IMR-90 (cell line): ENCODE measurements at regions of chr20 and their contacts with region 1.

Region 1: DNA sequence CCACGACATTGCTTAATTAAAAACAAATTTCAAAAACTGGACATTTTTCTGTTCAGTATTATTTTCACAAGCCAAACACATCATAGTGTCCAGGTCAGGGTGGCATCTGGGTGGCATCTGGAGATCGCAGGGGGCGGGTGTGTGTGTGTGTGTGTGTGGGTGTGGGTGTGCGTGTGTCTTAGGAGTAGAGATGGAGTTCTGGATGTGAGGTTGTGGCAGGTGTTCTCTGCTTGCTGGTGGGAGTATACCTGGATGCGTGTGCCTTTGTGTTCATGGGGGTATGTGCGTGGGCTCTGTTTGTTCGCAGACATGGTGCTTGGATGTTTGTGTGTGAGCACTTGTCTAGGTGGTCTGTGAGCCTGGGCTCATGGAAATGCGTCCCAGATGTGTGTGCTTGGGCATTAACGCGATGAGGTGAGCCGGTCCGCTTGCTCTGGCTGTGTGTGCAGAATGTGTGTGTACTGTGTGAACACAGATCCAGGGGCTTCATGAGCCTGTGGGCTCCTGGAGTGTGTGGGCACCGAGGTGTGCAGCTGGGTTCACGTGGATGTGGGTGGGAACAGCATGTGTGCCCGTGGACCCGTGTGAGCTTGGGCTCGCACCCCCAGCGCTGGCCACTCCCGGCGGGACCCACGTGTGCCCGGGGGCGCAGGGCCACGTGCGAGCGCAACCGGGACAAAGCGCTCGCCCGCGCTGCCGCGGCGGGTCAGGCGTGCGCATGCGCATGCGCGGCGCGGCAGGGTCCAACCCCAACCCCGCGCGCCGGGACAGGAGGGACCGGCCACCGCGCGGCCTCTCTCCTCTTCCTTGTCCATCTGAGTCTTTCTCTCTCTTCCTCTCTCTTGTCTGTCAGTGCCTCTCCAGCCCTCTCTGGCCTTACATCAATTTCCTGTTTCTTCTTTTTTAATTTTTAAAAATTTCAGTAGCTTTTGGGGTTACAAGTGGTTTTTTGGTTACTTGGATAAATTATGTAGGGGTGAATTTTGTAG is 60.4 kb downstream of the SRC start:
- DNase-seq: peak; percentile 28
- ATAC-seq: peak; percentile 91
- H3K4me3 ChIP-seq: peak overlapping the region; percentile 26
- H3K27ac ChIP-seq: no peak overlapping the region; the same call in 1 of the 2 replicates
- H3K4me1 ChIP-seq: peaks cover 2% of the 10 kb centered on the region; the same call in 1 of the 2 replicates
- H3K27me3 ChIP-seq: peaks cover 19% of the 10 kb centered on the region
- CTCF ChIP-seq: no peak
- POLR2A ChIP-seq: no peak
- RAD21 ChIP-seq: no peak

Region 2: GRCh38 chr20:37511610-37512275 is 105.4 kb after region 1 on chr20:
- CTCF ChIA-PET with region 1: no interaction called
- POLR2A ChIA-PET with region 1: no interaction called
- dilution Hi-C with region 1: no loop called
- in situ Hi-C with region 1: loop called (anchors 5 kb)
- intact Hi-C with region 1: no loop called
- DNase-seq: peak; percentile 67
- ATAC-seq: peak; percentile 81
- H3K4me3 ChIP-seq: no peak overlapping the region
- H3K27ac ChIP-seq: no peak overlapping the region
- H3K4me1 ChIP-seq: peaks cover 19% of the 10 kb centered on the region
- H3K27me3 ChIP-seq: no peaks in the 10 kb centered on the region
- CTCF ChIP-seq: no peak
- POLR2A ChIP-seq: no peak
- RAD21 ChIP-seq: no peak

Region 3: DNA sequence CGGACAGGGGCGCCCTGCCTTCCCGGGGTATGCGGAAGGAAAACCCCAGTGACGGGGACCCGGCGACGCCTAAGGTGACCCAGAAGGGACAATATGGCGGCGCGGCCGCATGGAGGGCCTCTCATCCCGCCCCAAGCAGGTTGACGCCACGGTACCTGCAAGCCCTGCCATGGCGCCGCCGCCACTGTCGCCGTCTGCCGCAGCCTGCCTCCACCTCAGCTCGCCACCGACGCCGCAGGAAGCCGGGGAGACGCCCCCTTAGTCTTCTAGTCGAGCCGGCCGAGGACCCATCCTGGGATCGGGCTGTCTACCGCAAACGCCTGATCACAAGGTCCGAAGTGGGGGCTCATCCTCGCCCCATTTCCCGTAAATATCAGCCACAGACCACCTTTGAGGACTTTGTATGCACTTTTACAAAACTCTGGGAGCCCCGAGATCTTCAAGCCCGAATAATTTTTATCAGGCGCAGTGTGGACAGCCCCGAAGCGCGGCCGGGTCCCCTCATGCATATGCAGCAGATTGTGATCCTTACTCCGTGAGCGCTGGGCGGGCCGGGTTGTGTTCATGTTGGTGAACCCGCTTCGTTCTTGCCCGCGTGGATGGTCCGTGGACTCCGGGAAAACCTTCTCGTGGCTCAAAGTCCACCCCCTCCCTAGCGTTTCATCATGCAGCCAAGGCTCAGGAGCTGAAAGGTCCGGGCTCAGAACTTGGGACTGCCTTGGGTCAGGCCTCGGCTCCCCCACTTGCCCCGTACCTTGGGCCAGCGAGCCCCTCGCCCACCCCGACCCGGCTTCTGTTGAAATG is 121.5 kb after region 1 on chr20 and contains the start of gene BLCAP:
- CTCF ChIA-PET with region 1: no interaction called
- POLR2A ChIA-PET with region 1: no interaction called
- dilution Hi-C with region 1: no loop called
- in situ Hi-C with region 1: no loop called
- intact Hi-C with region 1: loop called (anchors 5 kb)
- DNase-seq: peak; percentile 78
- ATAC-seq: peak; percentile 91
- H3K4me3 ChIP-seq: peak within 1 kb of the TSS; percentile 80
- H3K27ac ChIP-seq: peak within 1 kb of the TSS; percentile 87
- H3K4me1 ChIP-seq: peaks cover 11% of the 10 kb centered on the region
- H3K27me3 ChIP-seq: no peaks in the 10 kb centered on the region
- CTCF ChIP-seq: no peak
- POLR2A ChIP-seq: peak; percentile 72
- RAD21 ChIP-seq: no peak
- total RNA-seq, gene BLCAP: 17.7 and 23.3 TPM in 2 replicates